T-cell (primary cell): ENCODE measurements at regions of chr2 and their contacts with region 1.

Region 1: DNA sequence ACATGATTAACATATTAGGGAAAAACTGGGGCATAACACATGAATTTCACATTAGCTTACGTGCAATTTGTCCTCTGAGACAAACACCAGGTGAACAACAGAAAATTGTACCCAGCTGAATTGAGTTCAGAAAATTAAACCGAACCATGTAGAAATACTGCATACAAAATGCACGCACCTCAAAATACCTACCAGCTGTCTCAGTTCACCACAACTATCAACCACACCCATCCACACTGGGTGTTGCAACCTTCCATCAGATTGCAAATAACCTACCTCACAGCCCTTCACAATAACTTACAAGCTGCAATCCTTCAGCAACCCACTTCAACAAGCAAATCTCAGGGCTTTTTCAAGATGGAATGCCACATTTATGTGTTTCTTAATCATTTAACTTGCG is 55.9 kb downstream of the UNC50 start:
- DNase-seq: peak in 33 of 35 experiments; percentile 26 to 88 (median 60)
- ATAC-seq: peak; percentile 77 to 83 (median 80)
- H3K4me3 ChIP-seq: peak overlapping the region; percentile 15 to 49
- H3K4me3 Mint-ChIP-seq: peak overlapping the region; percentile 71 to 92 (median 78)
- H3K27ac ChIP-seq: peak overlapping the region; percentile 92
- H3K27ac Mint-ChIP-seq: peak overlapping the region; percentile 97 to 98
- H3K4me1 ChIP-seq: peaks cover 40 to 45% of the 10 kb centered on the region in 2 experiments
- H3K4me1 Mint-ChIP-seq: peaks cover 78 to 83% (median 82%) of the 10 kb centered on the region in 3 donors
- H3K27me3 ChIP-seq: no peaks in the 10 kb centered on the region
- H3K27me3 Mint-ChIP-seq: no peaks in the 10 kb centered on the region

Region 2: GRCh38 chr2:98551316-98551715 is 113.0 kb before region 1 on chr2:
- CTCF ChIA-PET with region 1: no interaction called
- POLR2A ChIA-PET with region 1: interaction called in 1 of 2 experiments, 12 read pairs
- DNase-seq: peak in 11 of 35 experiments; percentile 2 to 43 (median 7)
- ATAC-seq: peak in 3 of 4 experiments; percentile 12 to 66 (median 37)
- H3K4me3 ChIP-seq: no peak overlapping the region
- H3K4me3 Mint-ChIP-seq: no peak overlapping the region
- H3K27ac ChIP-seq: peak overlapping the region; percentile 15
- H3K27ac Mint-ChIP-seq: peak overlapping the region; percentile 41 to 85
- H3K4me1 ChIP-seq: peaks cover 0 to 51% of the 10 kb centered on the region in 2 experiments
- H3K4me1 Mint-ChIP-seq: peaks cover 48 to 57% (median 56%) of the 10 kb centered on the region in 3 donors
- H3K27me3 ChIP-seq: no peaks in the 10 kb centered on the region
- H3K27me3 Mint-ChIP-seq: no peaks in the 10 kb centered on the region

Region 3: DNA sequence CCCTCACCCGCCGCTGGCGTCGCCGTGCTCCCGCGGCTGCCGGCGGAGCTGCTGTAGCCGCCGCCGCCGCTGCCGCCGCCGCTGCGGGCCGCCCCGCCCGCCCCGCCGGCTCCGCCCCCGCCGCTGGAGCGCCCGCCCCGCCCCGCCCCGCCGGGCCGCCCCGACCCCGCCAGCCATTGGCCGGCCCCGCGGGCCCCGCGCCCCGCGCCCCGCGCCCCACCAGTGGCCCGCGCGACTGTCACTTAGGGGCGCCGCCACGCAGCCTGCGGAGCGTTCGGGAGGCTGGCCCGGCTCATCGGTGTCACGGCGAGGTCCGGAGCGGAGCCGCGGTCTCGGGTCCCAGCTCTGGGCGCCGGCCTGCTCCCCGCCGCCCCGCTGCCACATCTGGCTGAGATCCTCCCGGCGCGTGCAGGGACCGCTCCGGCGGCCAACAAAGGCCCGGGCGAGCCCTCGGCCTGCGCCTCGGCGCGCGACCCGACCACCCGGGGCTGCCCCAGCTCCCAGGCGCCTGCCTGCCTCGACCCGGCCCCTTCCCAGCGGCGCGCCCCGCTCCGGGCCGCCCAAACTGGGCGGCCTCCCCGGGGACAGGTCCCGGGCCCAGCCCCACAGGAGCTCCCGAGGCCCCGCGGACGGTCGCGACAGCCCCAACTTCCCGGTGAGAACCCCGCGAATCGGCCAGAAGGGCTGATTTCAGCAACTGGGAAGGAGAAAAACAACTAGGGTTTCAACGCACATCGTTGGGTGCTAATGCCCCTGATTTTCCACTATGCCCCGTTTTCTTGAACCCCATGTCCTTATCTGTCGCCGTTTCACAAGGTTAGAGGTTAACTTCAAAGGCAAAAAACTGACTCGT is 66.9 kb after region 1 on chr2 and contains the start of gene MGAT4A:
- CTCF ChIA-PET with region 1: interaction called, 6 read pairs
- POLR2A ChIA-PET with region 1: interaction called, 5 to 10 read pairs
- DNase-seq: peak; percentile 66 to 88 (median 78)
- ATAC-seq: peak; percentile 82 to 87 (median 84)
- H3K4me3 ChIP-seq: peak within 1 kb of the TSS; percentile 84 to 91
- H3K4me3 Mint-ChIP-seq: peak within 1 kb of the TSS; percentile 92 to 94 (median 93)
- H3K27ac ChIP-seq: peak within 1 kb of the TSS; percentile 59
- H3K27ac Mint-ChIP-seq: peak within 1 kb of the TSS; percentile 96 to 97
- H3K4me1 ChIP-seq: peaks cover 40 to 50% of the 10 kb centered on the region in 2 experiments
- H3K4me1 Mint-ChIP-seq: peaks cover 66 to 79% (median 68%) of the 10 kb centered on the region in 3 donors
- H3K27me3 ChIP-seq: no peaks in the 10 kb centered on the region
- H3K27me3 Mint-ChIP-seq: no peaks in the 10 kb centered on the region
- total RNA-seq, gene MGAT4A: 185 to 220 (median 199) TPM